ENCODE measurements at regions of chr3 and their contacts with region 1.

Region 1: GRCh38 chr3:30347679-30348216 is 258.7 kb upstream of the TGFBR2 start:
- DNase-seq: no peak

Region 2: DNA sequence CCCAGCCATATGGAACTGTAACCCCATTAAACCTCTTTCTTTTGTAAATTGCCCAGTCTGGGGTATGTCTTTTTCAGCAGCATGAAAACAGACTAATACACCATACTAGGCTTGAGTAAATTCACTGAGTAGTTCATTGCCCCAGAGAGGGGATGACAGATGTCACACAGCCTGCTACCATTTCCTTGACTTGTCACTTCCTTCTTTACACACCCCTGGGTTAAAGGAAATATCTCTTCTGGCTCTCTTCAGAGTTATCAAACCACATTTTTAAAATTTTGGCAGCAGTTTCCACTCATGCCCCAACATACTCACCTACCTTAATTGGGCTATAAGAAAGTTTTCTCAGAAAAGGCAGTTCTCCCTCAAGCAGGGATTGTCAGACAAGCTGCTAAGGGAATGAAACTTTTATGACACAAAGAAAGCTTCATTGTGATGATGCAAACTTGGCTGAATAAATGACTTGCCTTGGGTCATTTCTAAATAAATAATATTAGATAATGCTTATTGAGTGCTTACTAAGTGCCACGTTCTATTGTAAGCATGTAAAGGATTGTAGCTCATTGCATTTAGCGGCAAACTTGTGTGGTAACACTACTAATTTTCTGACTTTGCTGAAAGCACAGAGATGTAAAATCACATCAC is 1134.8 kb before region 1 on chr3:
- intact Hi-C with region 1: no loop called
- DNase-seq: no peak

Region 3: GRCh38 chr3:30286007-30286669 is 61.6 kb before region 1 on chr3:
- intact Hi-C with region 1: loop called (anchors 5 kb)
- DNase-seq: peak; percentile 78

Measured in cardiac septum (tissue), 1 donor.